ENCODE measurements at regions of chr9 and their contacts with region 1.

Region 1: GRCh38 chr9:2857564-2858198 is 13.8 kb upstream of the PUM3 start:
- DNase-seq: peak in 1 of 2 donors; percentile 14
- ATAC-seq: peak; percentile 33 to 70
- H3K4me3 ChIP-seq: no peak overlapping the region
- H3K27ac ChIP-seq: no peak overlapping the region
- H3K4me1 ChIP-seq: no peaks in the 10 kb centered on the region
- H3K27me3 ChIP-seq: no peaks in the 10 kb centered on the region
- CTCF ChIP-seq: peak; percentile 32 to 75 (median 53)
- POLR2A ChIP-seq: no peak

Region 2: DNA sequence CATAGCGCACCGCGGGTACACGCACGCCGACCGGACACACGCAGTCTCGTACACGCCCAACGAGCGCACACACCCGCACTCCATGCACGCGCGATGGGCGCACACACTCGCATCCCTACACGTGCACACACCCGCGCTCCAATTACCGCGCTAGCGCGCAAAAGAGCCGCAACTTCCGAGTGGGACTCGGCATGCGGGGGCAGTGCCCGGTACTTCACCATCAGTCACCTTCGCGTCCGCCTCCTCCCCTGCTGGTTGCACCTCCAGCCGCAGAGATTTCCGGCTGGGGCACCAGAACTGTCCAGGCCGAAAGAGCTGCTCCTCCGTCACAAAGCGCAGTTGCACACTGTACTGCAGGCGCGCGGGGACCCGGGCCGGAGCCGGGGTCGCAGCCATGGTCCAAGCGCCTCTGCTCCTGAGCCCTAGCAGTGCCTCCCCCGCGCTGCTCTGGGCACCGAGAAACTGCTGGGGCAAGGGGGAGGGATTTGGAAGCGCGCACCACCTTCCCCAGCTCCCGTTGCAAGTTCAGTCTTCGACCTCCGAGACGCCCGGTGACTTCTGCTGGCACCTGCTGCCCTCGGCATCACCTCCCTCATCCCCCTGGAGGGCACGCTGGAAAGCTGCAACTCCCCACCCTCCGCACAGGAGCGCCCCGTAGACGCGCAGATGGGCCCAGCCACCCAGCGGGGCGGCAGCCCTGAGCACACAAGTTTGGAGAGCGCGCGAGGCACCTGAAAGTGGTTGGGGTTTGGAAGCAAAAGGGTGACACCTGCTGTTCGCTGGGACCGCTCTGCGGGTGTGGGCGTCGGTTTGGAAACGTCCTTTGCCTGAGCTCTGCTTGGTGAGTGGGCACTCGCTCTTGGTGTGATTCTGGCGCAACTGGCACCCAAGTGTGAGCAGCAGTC is 323.6 kb after region 1 on chr9:
- in situ Hi-C with region 1: loop called in 2 of 4 experiments (anchors 25 kb)
- intact Hi-C with region 1: loop called (anchors 2 kb)
- DNase-seq: no peak
- ATAC-seq: no peak
- H3K4me3 ChIP-seq: peak overlapping the region in 3 of 4 donors; percentile 16 to 38 (median 37)
- H3K27ac ChIP-seq: no peak overlapping the region
- H3K4me1 ChIP-seq: peaks cover 0 to 2% of the 10 kb centered on the region in 2 donors
- H3K27me3 ChIP-seq: peaks cover 7 to 20% (median 11%) of the 10 kb centered on the region in 3 donors
- CTCF ChIP-seq: no peak
- POLR2A ChIP-seq: no peak

Region 3: GRCh38 chr9:3490957-3491356 is 633.3 kb after region 1 on chr9:
- in situ Hi-C with region 1: no loop called
- intact Hi-C with region 1: no loop called
- DNase-seq: no peak
- ATAC-seq: no peak
- H3K4me3 ChIP-seq: no peak overlapping the region
- H3K27ac ChIP-seq: no peak overlapping the region
- H3K4me1 ChIP-seq: peaks cover 8 to 14% of the 10 kb centered on the region in 2 donors
- H3K27me3 ChIP-seq: no peaks in the 10 kb centered on the region
- CTCF ChIP-seq: no peak
- POLR2A ChIP-seq: no peak

Region 4: DNA sequence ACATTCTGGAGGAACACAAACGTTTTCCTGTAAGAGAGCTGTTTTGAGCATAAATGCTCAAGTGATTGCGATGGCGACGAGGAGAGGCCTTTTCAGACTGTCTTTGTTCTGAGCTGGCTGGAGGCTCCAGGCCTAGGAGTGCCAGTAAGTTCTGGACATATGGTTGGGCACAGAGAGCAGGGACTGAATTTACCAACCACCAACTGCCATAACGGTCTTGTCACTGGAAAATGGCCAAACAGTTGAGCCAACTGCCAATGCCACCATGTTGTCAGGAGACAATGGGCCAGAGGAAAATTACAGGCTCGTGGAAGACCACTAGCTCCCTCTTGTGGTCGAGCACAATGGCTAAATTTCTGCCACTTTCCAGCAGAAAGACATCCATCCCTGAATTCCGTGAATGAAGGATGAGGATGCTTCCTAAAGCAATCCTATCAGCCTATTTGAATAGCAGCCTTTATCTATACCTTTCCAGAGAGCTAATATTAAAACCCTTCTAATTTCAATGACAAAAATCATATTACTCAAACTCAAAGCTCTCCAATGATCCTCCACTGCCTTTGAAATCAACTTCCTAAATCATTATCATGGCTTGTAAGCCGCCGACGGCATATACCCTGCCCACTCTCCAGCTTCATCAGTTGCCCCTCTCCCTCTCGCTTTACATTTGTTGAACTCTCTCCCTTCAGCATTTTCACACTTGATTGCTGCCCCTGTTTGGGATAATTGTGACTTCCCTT is 1509.1 kb after region 1 on chr9:
- in situ Hi-C with region 1: loop called in 1 of 4 experiments (anchors 25 kb)
- intact Hi-C with region 1: no loop called
- DNase-seq: peak in 1 of 2 donors; percentile 14
- ATAC-seq: peak in 1 of 2 donors; percentile 41
- H3K4me3 ChIP-seq: no peak overlapping the region
- H3K27ac ChIP-seq: no peak overlapping the region
- H3K4me1 ChIP-seq: no peaks in the 10 kb centered on the region
- H3K27me3 ChIP-seq: no peaks in the 10 kb centered on the region
- CTCF ChIP-seq: peak; percentile 9 to 63 (median 56)
- POLR2A ChIP-seq: no peak

Measured in gastrocnemius medialis (tissue), 4 donors.